Activated T-helper 2 cell treated with anti-CD3 and anti-CD28 coated beads, Interferon-gamma antibody, Interleukin-2, Interleukin-4, amounts not matched to agents 10 μg/mL and 5 μg/mL and 100 μg/mL, durations not matched to agents 14 hours and 24 hours and 36 hours (primary cell): ENCODE measurements at regions of chr6 and their contacts with region 1.

Region 1: GRCh38 chr6:95923518-95923917 is 92.3 kb upstream of the FUT9 start:
- DNase-seq: no peak
- H3K4me3 Mint-ChIP-seq: no peak overlapping the region
- H3K27ac Mint-ChIP-seq: no peak overlapping the region
- H3K4me1 Mint-ChIP-seq: no peaks in the 10 kb centered on the region
- H3K27me3 Mint-ChIP-seq: no peaks in the 10 kb centered on the region

Region 2: DNA sequence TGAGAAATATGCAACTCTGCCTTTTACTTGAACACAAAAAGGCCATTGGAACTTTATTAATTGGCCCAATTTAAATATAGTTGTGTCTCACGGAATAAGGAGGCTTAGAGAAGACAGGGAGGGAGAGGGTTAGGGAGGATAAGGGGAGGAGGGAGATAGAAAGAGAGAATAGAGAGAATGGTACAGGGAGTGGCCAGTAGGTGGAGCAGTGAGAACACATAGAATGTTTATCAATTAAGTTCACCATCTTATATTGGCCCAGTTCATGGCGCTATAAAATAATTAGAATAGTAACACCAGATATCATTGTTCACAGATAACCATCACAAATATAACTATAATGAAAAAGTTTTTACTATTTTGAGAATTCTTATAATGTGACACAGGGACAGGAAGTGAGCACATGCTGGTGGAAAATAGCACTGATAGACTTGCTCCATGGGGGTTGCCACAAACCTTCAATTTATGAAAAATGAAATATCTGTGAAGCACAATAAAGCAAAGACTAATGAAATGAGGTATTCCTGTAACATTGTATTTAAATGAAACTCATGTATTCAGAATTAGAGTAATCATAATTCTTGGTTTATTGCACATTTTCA is 720.3 kb before region 1 on chr6:
- intact Hi-C with region 1: loop called (anchors 5 kb)
- DNase-seq: no peak
- H3K4me3 Mint-ChIP-seq: no peak overlapping the region
- H3K27ac Mint-ChIP-seq: no peak overlapping the region
- H3K4me1 Mint-ChIP-seq: no peaks in the 10 kb centered on the region
- H3K27me3 Mint-ChIP-seq: no peaks in the 10 kb centered on the region

Region 3: DNA sequence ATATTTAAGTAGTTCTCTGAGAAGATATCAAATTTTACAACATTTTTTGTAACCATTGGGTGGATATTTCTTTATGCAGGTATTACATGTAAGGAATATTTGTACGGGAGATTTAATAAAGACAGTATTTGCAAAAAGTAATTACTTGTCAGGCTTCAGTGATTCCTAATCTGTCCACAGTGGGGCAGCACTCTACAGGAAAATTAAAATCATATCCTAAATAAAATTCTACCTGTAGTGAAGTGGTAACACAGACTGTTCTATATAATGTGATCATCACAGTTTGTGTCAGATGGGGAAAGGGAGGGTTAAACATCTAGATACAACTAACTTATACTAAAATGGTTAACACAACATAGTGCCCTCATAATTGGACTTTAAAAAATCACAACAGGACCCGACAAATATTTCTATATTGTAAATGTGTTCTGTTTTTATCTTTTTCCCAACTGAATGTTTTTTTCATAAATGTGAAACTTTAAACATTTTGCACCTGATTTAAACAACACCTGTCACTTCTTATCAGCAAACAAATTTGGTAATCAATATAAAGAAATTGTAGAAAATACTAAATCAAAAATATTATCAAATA is 491.8 kb before region 1 on chr6:
- intact Hi-C with region 1: loop called (anchors 2 kb)
- DNase-seq: no peak
- H3K4me3 Mint-ChIP-seq: no peak overlapping the region
- H3K27ac Mint-ChIP-seq: no peak overlapping the region
- H3K4me1 Mint-ChIP-seq: no peaks in the 10 kb centered on the region
- H3K27me3 Mint-ChIP-seq: no peaks in the 10 kb centered on the region

Region 4: GRCh38 chr6:95670011-95670463 is 253.5 kb before region 1 on chr6:
- intact Hi-C with region 1: no loop called
- DNase-seq: no peak
- H3K4me3 Mint-ChIP-seq: no peak overlapping the region
- H3K27ac Mint-ChIP-seq: no peak overlapping the region
- H3K4me1 Mint-ChIP-seq: no peaks in the 10 kb centered on the region
- H3K27me3 Mint-ChIP-seq: no peaks in the 10 kb centered on the region